Heart left ventricle (tissue), 16 donors: ENCODE measurements at regions of chr4 and their contacts with region 1.

Region 1: GRCh38 chr4:169612871-169613859 is 782 bp upstream of the NEK1 start:
- DNase-seq: peak in 4 of 5 donors; percentile 63 to 74 (median 66)
- ATAC-seq: peak; percentile 38 to 71 (median 62)
- H3K4me3 ChIP-seq: peak overlapping the region; percentile 71 to 89 (median 82)
- H3K27ac ChIP-seq: peak overlapping the region; percentile 32 to 98 (median 95)
- H3K4me1 ChIP-seq: peaks cover 0 to 25% (median 15%) of the 10 kb centered on the region in 12 donors
- H3K27me3 ChIP-seq: no peaks in the 10 kb centered on the region
- CTCF ChIP-seq: peak; percentile 50 to 86 (median 69)
- POLR2A ChIP-seq: no peak

Region 2: GRCh38 chr4:169723207-169723965 is 110.2 kb after region 1 on chr4:
- intact Hi-C with region 1: loop called in 3 of 10 experiments (anchors 5 to 10 kb)
- DNase-seq: no peak
- ATAC-seq: no peak
- H3K4me3 ChIP-seq: no peak overlapping the region
- H3K27ac ChIP-seq: no peak overlapping the region
- H3K4me1 ChIP-seq: no peaks in the 10 kb centered on the region
- H3K27me3 ChIP-seq: no peaks in the 10 kb centered on the region
- CTCF ChIP-seq: peak in 3 of 12 donors; percentile 15 to 24 (median 23)
- POLR2A ChIP-seq: no peak

Region 3: GRCh38 chr4:169757575-169758184 is 144.5 kb after region 1 on chr4 and contains the start of gene HPF1:
- intact Hi-C with region 1: loop called in 3 of 10 experiments (anchors 2 to 10 kb)
- DNase-seq: peak; percentile 91 to 97 (median 93)
- ATAC-seq: peak; percentile 91 to 99 (median 98)
- H3K4me3 ChIP-seq: peak within 1 kb of the TSS; percentile 49 to 92 (median 89)
- H3K27ac ChIP-seq: peak within 1 kb of the TSS in 11 of 12 donors; percentile 32 to 84 (median 64)
- H3K4me1 ChIP-seq: peaks cover 4 to 26% (median 15%) of the 10 kb centered on the region in 12 donors
- H3K27me3 ChIP-seq: no peaks in the 10 kb centered on the region
- CTCF ChIP-seq: peak in 1 of 12 donors; percentile 27
- POLR2A ChIP-seq: peak in 1 of 2 donors; percentile 57
- total RNA-seq, gene HPF1: 15.7 to 38.3 (median 20.3) TPM

Region 4: GRCh38 chr4:170027181-170027829 is 414.1 kb after region 1 on chr4:
- intact Hi-C with region 1: loop called in 8 of 10 experiments (anchors 1 to 10 kb)
- DNase-seq: peak; percentile 95 to 97 (median 95)
- ATAC-seq: peak; percentile 93 to 97 (median 94)
- H3K4me3 ChIP-seq: peak overlapping the region; percentile 75 to 99 (median 92)
- H3K27ac ChIP-seq: peak overlapping the region in 10 of 12 donors; percentile 85 to 93 (median 89)
- H3K4me1 ChIP-seq: peaks cover 0 to 15% (median 5%) of the 10 kb centered on the region in 12 donors
- H3K27me3 ChIP-seq: peaks cover 0 to 26% (median 0%) of the 10 kb centered on the region in 9 donors
- CTCF ChIP-seq: no peak
- POLR2A ChIP-seq: peak in 1 of 2 donors; percentile 15

Region 5: DNA sequence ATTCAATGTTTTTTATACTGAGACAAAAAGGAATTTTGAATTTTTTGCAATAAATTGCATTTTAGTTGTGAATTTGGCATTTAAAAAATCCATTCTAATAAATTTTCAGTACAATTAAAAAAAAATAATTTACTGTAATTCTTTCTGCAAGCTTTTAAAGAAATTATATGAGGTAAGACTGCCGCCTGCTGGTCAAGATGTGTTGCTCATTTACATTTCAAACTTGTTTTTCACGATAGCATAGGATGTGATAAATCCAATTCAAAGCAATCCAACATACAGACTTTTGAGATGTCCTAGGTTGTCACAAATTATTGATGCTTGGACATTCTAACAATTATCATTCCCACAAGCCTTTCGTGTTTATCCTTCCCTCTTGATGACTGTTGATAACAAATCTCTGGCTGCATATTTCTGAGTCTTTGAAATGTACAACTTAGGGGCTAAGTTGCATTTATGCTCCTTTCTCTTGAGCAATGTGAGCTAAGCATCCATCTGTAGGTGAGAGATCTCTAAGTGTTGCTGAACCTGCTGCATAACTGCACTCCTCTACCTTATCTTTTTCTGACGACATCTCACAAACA is 434.7 kb after region 1 on chr4:
- intact Hi-C with region 1: loop called in 6 of 10 experiments (anchors 5 to 10 kb)
- DNase-seq: peak in 2 of 5 donors; percentile 16 to 43
- ATAC-seq: no peak
- H3K4me3 ChIP-seq: no peak overlapping the region
- H3K27ac ChIP-seq: no peak overlapping the region
- H3K4me1 ChIP-seq: no peaks in the 10 kb centered on the region
- H3K27me3 ChIP-seq: no peaks in the 10 kb centered on the region
- CTCF ChIP-seq: peak; percentile 60 to 88 (median 80)
- POLR2A ChIP-seq: no peak